PC-3 (cell line): ENCODE measurements at regions of chr11 and their contacts with region 1.

Region 1: GRCh38 chr11:43579171-43579918 is 101.2 kb upstream of the HSD17B12 start:
- DNase-seq: peak; percentile 59
- ATAC-seq: peak; percentile 75
- H3K4me3 ChIP-seq: peak overlapping the region; percentile 77
- H3K27ac ChIP-seq: no peak overlapping the region
- H3K4me1 ChIP-seq: no peaks in the 10 kb centered on the region; the same call in 1 of the 2 replicates
- H3K27me3 ChIP-seq: peaks cover 52% of the 10 kb centered on the region
- CTCF ChIP-seq: peak; percentile 29

Region 2: GRCh38 chr11:43708776-43709175 is 129.4 kb after region 1 on chr11:
- CTCF ChIA-PET with region 1: interaction called, 4 read pairs
- POLR2A ChIA-PET with region 1: no interaction called
- intact Hi-C with region 1: loop called (anchors 10 kb)
- DNase-seq: peak; percentile 10
- ATAC-seq: no peak
- H3K4me3 ChIP-seq: no peak overlapping the region
- H3K27ac ChIP-seq: no peak overlapping the region
- H3K4me1 ChIP-seq: peaks cover 4% of the 10 kb centered on the region; the same call in 1 of the 2 replicates
- H3K27me3 ChIP-seq: no peaks in the 10 kb centered on the region
- CTCF ChIP-seq: peak; percentile 42; the same call in 1 of the 2 replicates